Activated T-helper 1 cell treated with anti-CD3 and anti-CD28 coated beads, Interleukin-12 subunit alpha, Interleukin-12 subunit beta, Interleukin-2, Interleukin-4 antibody, amounts not matched to agents 30 ng/mL and 10 ng/mL and 1 ng/mL, durations not matched to agents 14 hours and 24 hours and 36 hours (primary cell): ENCODE measurements at regions of chr7 and their contacts with region 1.

Region 1: GRCh38 chr7:148527707-148528168 is 62.8 kb upstream of the C7orf33 start:
- DNase-seq: peak; percentile 78
- H3K4me3 Mint-ChIP-seq: no peak overlapping the region
- H3K27ac Mint-ChIP-seq: peak overlapping the region; percentile 22
- H3K4me1 Mint-ChIP-seq: peaks cover 12% of the 10 kb centered on the region
- H3K27me3 Mint-ChIP-seq: peaks cover 20% of the 10 kb centered on the region

Region 2: DNA sequence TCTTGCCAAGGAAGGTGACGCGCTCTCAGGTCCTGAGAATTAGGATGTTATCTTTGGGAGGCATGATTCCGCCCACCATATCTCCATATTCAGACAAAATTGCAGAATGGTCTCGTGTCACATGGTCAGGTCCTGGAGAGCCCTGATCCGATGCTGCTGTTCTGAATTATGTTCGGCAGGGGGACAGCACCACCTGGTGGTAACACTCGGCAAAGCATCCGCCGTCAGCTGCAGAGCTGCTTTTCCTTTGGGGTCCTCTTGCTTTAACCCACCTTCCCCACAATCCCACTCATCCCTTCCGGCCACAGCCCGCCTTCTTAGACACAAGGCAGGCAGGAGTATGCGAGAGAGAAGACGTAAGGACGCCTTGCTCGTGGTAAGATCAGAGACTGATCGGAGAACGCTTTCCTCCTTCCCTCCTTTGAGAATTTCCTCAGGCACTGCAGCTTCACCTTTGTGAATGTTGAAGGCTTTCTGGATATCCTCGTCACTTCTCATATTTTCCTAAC is 265.0 kb before region 1 on chr7:
- intact Hi-C with region 1: loop called (anchors 1 kb)
- DNase-seq: peak; percentile 22
- H3K4me3 Mint-ChIP-seq: peak overlapping the region; percentile 30
- H3K27ac Mint-ChIP-seq: no peak overlapping the region
- H3K4me1 Mint-ChIP-seq: peaks cover 8% of the 10 kb centered on the region
- H3K27me3 Mint-ChIP-seq: peaks cover 7% of the 10 kb centered on the region

Region 3: GRCh38 chr7:148447221-148447849 is 80.4 kb before region 1 on chr7:
- intact Hi-C with region 1: no loop called
- DNase-seq: no peak
- H3K4me3 Mint-ChIP-seq: no peak overlapping the region
- H3K27ac Mint-ChIP-seq: no peak overlapping the region
- H3K4me1 Mint-ChIP-seq: peaks cover 12% of the 10 kb centered on the region
- H3K27me3 Mint-ChIP-seq: no peaks in the 10 kb centered on the region

Region 4: GRCh38 chr7:149090397-149091195 is 562.9 kb after region 1 on chr7 and contains the start of gene ZNF786:
- intact Hi-C with region 1: loop called (anchors 10 kb)
- DNase-seq: peak; percentile 87
- H3K4me3 Mint-ChIP-seq: peak within 1 kb of the TSS; percentile 99
- H3K27ac Mint-ChIP-seq: peak within 1 kb of the TSS; percentile 100
- H3K4me1 Mint-ChIP-seq: peaks cover 17% of the 10 kb centered on the region
- H3K27me3 Mint-ChIP-seq: peaks cover 2% of the 10 kb centered on the region
- total RNA-seq, gene ZNF786: 9.9 and 10.9 TPM in 2 replicates